ENCODE measurements at regions of chr3 and their contacts with region 1.

Region 1: DNA sequence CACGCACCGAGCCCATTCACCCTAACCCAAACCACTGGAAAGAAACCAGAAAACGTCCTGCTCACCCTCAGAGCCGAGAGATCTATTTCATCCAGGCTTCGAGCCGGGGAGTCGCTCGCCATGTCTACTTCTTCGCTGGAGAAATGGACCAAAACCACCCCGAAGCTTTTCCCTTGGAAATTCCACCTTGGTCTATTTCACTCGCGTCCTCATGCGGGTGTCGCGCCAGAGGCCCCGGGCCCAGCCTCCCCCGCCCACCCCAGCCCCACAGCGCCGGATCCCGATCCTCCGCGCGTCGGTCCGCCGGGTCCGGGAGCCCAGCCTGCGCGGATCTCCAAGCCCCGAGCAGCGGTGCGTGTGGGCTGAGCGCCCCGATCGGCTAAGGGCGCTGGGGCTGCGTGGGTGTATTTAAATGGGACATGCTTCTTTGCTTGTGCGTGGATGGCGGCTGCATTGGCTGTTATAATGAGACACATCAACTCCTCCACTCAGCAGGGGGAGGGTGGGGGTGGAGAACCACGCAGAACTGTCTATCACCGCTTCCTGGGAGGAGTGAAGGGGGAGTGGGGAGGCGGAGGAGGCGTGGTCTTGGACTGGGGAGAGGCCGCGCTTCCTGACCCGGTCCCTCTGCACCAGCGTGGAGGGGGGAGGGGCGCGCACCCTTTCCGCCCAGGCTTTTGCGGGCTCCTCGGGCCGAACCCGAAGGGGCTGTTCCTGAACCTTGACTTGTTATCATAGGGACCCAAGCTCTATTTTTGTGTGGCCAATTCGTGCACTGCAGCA is at the start of gene TNIK:
- DNase-seq: peak; percentile 96
- H3K4me3 Mint-ChIP-seq: peak within 1 kb of the TSS; percentile 89
- H3K27ac Mint-ChIP-seq: peak within 1 kb of the TSS; percentile 89
- H3K4me1 Mint-ChIP-seq: peaks cover 38% of the 10 kb centered on the region
- H3K27me3 Mint-ChIP-seq: no peaks in the 10 kb centered on the region
- total RNA-seq, gene TNIK: 22.4 to 27.1 TPM

Region 2: DNA sequence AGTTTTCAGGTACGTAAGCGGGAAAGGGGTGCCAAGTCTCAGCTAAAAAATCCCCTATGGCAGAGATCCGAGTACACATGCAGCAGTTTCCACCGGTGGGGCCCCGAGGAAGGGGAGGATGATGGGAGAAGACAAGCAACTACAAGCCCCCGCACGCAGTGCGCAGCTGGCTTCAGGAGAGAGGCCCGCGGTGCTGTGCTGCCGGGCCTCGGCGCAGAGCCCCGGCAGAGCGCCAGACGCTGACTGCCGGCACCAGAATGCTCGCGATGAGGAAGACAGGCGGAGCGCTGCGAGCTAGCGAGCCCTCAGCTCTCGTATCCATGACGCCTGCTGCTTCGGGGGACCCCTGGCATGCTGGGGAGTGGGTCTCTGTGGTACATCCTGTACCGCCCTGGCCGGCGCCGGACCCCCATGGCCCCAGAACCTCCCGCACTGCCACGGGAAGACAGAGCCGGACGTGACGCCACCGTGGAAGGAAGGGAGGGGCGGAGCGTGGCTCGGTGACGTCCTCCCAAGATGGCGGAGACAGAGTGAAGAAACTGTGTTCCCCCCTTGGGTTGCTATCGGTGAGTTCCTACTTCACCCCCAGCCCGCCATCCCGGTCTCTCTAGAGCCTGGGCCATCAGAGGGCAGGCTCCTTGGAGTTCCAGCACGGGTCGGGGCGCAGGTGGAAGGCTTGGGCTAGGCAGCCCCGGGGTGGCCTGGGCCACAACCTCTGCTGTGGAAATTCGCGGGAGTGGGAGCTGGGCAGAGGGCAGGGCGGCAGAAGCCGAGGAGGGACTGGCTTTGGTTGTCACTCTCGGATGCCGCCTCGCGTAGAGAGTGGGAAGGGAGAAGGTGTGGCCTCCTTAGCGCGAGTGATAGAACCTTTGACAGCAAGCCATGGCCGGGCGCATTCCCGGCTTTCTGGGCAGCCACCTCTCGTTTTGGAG is 1687.0 kb before region 1 on chr3 and contains the start of gene MYNN:
- CTCF ChIA-PET with region 1: no interaction called
- POLR2A ChIA-PET with region 1: no interaction called
- intact Hi-C with region 1: loop called (anchors 2 kb)
- DNase-seq: peak; percentile 95
- H3K4me3 Mint-ChIP-seq: peak within 1 kb of the TSS; percentile 96
- H3K27ac Mint-ChIP-seq: peak within 1 kb of the TSS; percentile 97
- H3K4me1 Mint-ChIP-seq: peaks cover 39% of the 10 kb centered on the region
- H3K27me3 Mint-ChIP-seq: no peaks in the 10 kb centered on the region
- total RNA-seq, gene MYNN: 12.8 to 14.0 TPM

Region 3: DNA sequence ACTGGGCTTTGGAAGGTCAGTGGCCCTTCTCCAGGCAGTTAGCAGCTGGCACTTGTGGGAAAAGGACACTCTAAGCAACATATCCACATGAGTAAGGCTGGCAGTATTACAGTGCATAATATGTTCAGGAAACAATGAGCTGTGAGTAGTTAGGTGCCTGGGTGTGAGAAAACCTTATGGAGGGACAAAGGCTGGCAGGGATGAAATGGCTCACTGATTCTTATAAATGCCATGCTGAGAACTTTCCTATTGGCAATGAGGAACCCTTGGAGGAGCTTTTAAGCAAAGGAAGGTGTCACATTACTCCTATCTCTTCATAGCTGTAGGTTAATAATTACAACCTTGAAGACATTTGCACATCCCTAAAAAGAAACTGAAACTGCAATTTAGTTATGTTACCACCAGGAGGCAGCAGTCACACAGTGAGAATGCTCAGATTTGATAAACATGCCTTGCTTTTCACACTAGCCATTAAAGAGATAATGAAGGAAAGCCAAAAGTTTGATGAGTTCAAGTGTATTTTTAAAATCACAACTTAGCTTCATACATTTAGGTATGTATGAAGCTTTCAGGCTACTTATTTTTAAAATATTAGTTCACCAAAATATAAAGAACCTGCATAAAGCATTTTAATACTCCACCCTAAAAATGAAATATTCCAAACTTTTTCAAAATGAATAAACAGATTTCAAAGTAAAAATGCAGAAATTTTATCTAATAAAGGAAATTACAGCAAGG is 297.0 kb before region 1 on chr3:
- CTCF ChIA-PET with region 1: interaction called, 6 read pairs
- POLR2A ChIA-PET with region 1: no interaction called
- intact Hi-C with region 1: loop called (anchors 1 kb)
- DNase-seq: no peak
- H3K4me3 Mint-ChIP-seq: no peak overlapping the region
- H3K27ac Mint-ChIP-seq: no peak overlapping the region
- H3K4me1 Mint-ChIP-seq: peaks cover 24% of the 10 kb centered on the region
- H3K27me3 Mint-ChIP-seq: no peaks in the 10 kb centered on the region

Region 4: GRCh38 chr3:171225708-171226107 is 234.4 kb before region 1 on chr3:
- CTCF ChIA-PET with region 1: interaction called, 3 read pairs
- POLR2A ChIA-PET with region 1: no interaction called
- intact Hi-C with region 1: loop called (anchors 1 kb)
- DNase-seq: no peak
- H3K4me3 Mint-ChIP-seq: no peak overlapping the region
- H3K27ac Mint-ChIP-seq: peak overlapping the region; percentile 56
- H3K4me1 Mint-ChIP-seq: peaks cover 41% of the 10 kb centered on the region
- H3K27me3 Mint-ChIP-seq: no peaks in the 10 kb centered on the region

Region 5: DNA sequence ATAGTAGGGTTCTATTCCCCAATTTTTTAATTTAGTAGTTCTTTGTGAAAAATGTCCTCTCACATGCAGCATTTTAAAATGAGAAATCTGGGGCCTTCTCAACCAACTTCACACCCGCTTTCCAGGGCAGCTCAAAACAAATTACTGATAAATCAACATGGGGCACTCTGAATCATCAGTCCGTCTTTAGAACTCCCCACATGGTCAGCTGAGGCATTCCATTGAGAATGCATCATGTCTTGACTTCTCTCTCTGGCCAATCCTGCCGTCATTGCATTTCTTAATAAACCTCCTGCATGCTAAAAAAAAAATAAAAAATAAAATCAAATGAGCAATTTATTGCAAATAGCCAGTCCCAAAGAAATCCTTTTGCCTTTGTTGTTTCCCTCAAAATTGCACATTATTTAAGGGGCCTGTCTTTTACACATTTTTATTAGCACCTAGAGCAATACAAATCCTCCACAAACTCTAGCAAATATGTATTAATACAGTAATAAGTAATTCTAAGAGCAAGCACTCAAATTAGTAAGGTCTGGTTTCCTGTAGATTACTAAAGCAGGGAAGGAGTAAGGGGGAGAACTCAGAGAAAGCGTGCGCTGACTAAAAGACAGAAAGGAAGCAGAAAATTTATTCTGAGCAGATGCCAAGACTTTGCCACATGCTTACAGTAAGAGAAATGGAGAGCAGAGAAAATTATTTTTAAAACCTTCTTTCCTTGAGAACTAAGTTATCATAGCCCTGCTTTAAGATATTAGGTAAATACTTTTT is 175.6 kb before region 1 on chr3:
- CTCF ChIA-PET with region 1: no interaction called
- POLR2A ChIA-PET with region 1: interaction called, 3 read pairs
- intact Hi-C with region 1: loop called (anchors 2 kb)
- DNase-seq: peak; percentile 31
- H3K4me3 Mint-ChIP-seq: peak overlapping the region; percentile 24
- H3K27ac Mint-ChIP-seq: peak overlapping the region; percentile 34
- H3K4me1 Mint-ChIP-seq: peaks cover 57% of the 10 kb centered on the region
- H3K27me3 Mint-ChIP-seq: no peaks in the 10 kb centered on the region

Region 6: DNA sequence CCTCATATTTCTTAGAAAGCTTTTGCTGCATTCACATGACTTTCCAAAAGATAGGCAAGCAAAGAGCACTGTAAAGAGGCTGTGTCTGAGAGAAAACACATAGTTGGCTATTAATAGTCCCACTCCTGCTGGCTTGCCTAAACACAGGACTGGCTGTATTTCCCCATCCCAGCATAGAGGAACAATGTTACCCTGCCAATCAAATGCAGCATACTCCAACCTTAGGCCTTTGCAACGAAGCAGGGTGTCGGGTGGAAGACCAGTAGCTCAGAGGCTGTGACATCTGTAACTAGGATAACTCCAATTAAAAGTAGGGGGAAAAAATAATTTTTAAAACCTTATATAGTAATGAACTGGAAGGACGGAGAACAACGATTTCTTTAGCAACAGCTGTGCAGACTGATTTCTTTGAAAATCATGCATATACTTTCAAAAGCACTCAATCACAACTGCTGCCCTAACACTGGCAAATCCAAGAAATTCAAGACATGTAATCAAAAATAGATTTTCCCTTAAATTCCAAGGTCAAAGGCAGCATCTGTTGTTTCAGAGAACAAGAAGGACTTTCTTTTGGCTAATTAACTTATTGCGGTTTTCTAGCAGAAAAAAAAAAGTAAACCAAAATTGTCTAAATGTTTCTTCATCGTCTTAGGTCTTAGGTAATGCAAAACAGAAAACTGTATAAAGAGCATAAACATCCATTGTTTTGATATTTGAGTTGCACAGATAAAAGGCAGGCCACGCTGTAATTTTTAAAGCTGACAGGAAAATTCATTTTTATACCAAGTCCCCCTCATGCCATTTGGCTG is 139.2 kb before region 1 on chr3:
- CTCF ChIA-PET with region 1: no interaction called
- POLR2A ChIA-PET with region 1: no interaction called
- intact Hi-C with region 1: no loop called
- DNase-seq: no peak
- H3K4me3 Mint-ChIP-seq: no peak overlapping the region
- H3K27ac Mint-ChIP-seq: no peak overlapping the region
- H3K4me1 Mint-ChIP-seq: peaks cover 29% of the 10 kb centered on the region
- H3K27me3 Mint-ChIP-seq: no peaks in the 10 kb centered on the region

Region 7: DNA sequence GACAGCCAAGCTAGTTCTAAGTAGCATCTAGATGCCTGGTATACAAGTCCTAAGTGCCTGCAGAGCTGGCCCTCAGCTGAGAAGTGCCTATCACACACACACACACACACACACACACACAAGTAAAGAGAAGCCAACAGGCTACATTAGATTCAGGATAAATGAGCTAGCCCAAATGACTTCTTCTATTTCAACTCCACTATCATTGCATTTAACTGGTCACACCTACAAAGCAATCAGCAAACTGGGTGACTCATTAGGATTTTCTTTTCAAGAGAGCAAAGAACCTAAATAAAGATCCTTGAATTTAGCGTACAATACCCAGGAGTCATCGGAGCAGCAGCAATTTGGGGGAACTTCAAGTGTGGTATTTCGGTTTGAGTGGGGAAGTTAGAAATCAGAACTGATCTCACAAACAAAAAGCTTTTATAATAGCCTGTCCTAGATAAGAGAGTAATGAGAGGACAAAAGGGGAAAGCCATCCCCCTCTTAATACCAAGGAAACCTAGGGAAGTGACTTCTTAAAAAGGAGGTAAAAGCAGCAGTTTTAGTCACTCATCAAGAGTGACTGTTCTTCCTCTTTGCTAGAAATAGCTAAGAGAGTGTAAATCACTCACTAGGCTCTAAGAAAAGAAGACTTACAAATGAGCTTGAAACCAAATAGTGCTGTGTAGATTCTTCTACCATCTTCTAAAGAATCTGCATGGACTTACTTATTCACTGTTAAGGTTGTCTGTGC is 112.7 kb before region 1 on chr3:
- CTCF ChIA-PET with region 1: interaction called, 4 read pairs
- POLR2A ChIA-PET with region 1: no interaction called
- intact Hi-C with region 1: loop called (anchors 2 kb)
- DNase-seq: no peak
- H3K4me3 Mint-ChIP-seq: no peak overlapping the region
- H3K27ac Mint-ChIP-seq: peak overlapping the region; percentile 70
- H3K4me1 Mint-ChIP-seq: peaks cover 66% of the 10 kb centered on the region
- H3K27me3 Mint-ChIP-seq: no peaks in the 10 kb centered on the region

Region 8: GRCh38 chr3:171491361-171491760 is 31.2 kb after region 1 on chr3:
- CTCF ChIA-PET with region 1: no interaction called
- POLR2A ChIA-PET with region 1: interaction called, 4 read pairs
- intact Hi-C with region 1: loop called (anchors 1 kb)
- DNase-seq: no peak
- H3K4me3 Mint-ChIP-seq: peak overlapping the region; percentile 55
- H3K27ac Mint-ChIP-seq: peak overlapping the region; percentile 57
- H3K4me1 Mint-ChIP-seq: peaks cover 38% of the 10 kb centered on the region
- H3K27me3 Mint-ChIP-seq: no peaks in the 10 kb centered on the region

Region 9: GRCh38 chr3:171526869-171527268 is 66.7 kb after region 1 on chr3:
- CTCF ChIA-PET with region 1: no interaction called
- POLR2A ChIA-PET with region 1: no interaction called
- intact Hi-C with region 1: no loop called
- DNase-seq: no peak
- H3K4me3 Mint-ChIP-seq: no peak overlapping the region
- H3K27ac Mint-ChIP-seq: no peak overlapping the region
- H3K4me1 Mint-ChIP-seq: peaks cover 2% of the 10 kb centered on the region
- H3K27me3 Mint-ChIP-seq: no peaks in the 10 kb centered on the region

Region 10: GRCh38 chr3:171915275-171915674 is 455.1 kb after region 1 on chr3:
- CTCF ChIA-PET with region 1: no interaction called
- POLR2A ChIA-PET with region 1: no interaction called
- intact Hi-C with region 1: no loop called
- DNase-seq: no peak
- H3K4me3 Mint-ChIP-seq: no peak overlapping the region
- H3K27ac Mint-ChIP-seq: no peak overlapping the region
- H3K4me1 Mint-ChIP-seq: no peaks in the 10 kb centered on the region
- H3K27me3 Mint-ChIP-seq: peaks cover 15% of the 10 kb centered on the region